Lower lobe of right lung (tissue), 2 donors: ENCODE measurements at regions of chr13 and their contacts with region 1.

Region 1: DNA sequence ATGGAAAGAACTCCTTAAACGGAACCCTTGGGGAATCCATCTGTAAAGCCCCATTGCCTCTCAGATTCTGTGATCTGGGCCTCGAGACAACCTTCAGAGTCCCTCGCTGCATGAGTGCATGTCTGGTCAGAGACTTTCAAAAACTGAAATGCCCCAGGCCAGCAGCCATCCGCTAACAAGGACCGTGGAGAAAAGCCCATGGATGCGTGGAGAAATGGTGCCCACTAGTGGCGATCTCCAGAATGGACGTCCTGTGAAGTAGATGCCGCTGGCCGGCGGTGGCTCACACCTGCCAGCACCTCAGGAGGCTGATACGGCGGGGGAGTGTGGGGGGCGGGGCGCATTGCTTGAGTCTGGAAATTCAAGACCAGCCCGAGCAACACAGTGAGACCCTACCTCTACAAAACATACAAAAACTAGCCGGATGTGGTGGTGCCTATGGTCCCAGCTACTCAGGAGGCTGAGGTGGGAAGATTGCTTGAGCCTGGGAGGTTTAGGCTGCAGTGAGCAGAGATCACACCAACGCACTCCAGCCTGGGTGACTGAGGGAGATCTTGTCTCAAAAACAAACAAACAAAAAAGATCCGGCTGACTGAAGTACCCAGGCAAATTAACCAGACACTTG is 7.9 kb upstream of the CDC16 start:
- DNase-seq: peak; percentile 86
- ATAC-seq: peak; percentile 91 to 93
- H3K4me3 ChIP-seq: no peak overlapping the region
- H3K27ac ChIP-seq: no peak overlapping the region
- H3K4me1 ChIP-seq: peaks cover 21% of the 10 kb centered on the region
- H3K27me3 ChIP-seq: peaks cover 11% of the 10 kb centered on the region
- CTCF ChIP-seq: peak; percentile 88

Region 2: DNA sequence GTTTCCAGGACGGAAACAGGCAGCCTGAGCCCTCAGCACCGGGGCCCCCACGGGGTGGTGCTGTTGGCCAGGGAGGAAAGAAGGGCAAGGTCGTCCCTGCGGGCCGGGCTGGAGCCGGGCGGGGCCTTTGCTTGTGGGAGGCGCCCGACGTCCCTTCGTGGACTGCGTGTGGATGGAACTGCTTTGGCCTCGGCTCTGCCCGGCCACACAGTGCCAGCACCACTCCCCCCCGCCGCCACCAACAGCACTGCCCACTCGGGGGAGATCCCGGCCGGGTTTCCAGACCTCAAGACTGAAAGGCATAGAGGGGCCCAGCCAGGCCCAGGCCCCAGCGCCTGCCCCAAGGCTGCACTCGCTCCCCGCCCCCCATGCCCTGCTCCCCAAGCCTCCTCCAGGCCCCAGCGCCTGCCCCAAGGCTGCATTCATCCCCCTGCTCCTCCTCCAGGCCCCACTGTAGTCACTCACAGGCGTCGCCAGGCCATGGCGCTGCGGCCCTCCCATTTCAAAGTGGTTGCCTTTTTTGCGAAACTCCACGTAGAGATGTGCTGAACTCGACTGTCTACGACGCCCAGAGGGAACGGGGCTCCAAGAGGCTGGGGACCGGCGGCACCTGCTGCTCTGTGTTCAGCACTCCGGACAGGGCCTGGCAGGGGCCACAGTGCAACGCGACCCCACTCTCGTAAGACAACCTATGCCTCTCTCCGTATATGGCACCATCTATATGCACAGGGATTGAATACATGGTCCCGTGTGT is 275.4 kb before region 1 on chr13:
- intact Hi-C with region 1: loop called (anchors 5 kb)
- DNase-seq: peak; percentile 88
- ATAC-seq: peak; percentile 94 to 96
- H3K4me3 ChIP-seq: peak overlapping the region; percentile 17
- H3K27ac ChIP-seq: no peak overlapping the region
- H3K4me1 ChIP-seq: peaks cover 12% of the 10 kb centered on the region
- H3K27me3 ChIP-seq: no peaks in the 10 kb centered on the region
- CTCF ChIP-seq: peak; percentile 87